GM12878 (cell line): ENCODE measurements at regions of chr18 and their contacts with region 1.

Region 1: DNA sequence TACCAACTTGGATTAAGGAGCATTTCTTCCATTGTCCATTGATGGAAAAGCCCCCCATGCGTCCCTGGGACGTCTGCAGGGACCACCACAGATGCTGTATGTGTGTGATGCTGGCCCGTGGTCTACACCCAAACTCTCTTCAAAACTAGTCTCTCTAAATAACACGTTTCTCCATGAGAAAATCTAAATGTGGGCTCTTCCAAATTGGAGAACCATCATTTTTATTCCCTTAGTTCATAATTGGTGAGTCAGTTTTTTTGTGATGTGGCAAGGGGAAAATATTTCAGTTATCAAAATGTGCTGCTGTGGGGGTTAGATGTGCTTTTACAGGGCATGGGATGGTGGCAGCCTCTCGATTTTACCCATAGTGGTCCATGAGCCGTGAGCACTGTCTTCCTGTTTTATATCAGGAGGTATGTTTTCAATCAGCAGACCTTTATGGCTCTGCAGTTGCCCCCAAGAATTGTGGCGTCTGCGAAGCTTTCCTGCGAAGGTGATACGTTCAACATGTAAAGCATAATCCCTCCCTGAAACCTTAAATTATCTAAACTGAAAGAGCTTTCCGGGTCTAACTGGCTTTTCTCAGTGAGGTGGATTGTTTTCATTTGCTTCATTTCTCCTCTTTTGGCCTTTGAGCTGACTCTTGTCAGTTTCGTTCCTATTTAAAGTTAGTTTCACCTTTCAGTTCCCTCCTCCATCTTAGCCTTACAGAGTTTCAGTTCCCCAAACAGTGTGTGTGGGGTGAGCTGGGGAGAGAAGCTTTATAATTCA is 78.4 kb downstream of the SETBP1 start:
- DNase-seq: peak; percentile 98
- ATAC-seq: peak; percentile 93
- H3K4me3 ChIP-seq: peak overlapping the region; percentile 28
- H3K27ac ChIP-seq: peak overlapping the region; percentile 98
- H3K4me1 ChIP-seq: peaks cover 35% of the 10 kb centered on the region
- H3K27me3 ChIP-seq: no peaks in the 10 kb centered on the region
- CTCF ChIP-seq: no peak
- EP300 ChIP-seq: peak; percentile 99 to 100
- POLR2A ChIP-seq: no peak
- RAD21 ChIP-seq: peak; percentile 22; the same call in 1 of the 2 replicates

Region 2: DNA sequence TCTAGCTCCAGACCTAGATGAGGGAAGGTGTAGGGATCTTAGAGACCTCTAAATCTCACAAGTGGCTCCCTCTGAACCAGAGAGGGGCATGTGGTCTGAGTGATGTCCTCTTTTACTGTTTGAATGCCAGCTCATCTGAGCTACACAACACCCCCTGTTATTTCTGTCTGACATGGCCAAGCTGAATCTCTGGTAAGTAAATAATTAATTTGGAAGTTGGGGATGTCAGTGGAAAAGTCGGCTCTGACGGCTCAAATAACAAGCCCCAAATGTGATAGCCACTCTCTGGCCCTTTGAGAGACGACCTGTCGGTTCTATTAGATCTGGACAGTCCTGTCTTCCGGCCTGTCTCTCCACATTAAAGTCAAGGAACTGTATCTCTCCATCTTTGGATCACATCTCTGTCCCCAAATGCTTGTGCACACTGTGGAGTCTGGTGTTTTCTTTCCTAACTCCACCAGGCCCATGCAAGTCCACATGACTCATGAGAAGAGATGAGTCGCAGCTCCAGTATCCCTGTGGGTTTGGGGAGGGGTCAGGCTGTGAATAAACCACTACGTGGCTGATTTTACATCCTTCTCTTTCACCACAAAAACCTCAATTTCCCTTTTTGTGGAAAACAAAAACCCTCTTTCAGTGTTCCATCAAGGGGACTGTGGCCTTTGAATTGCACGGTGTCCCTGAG is 25.8 kb before region 1 on chr18:
- CTCF ChIA-PET with region 1: interaction called, 4 read pairs
- POLR2A ChIA-PET with region 1: interaction called, 12 read pairs
- RAD21 ChIA-PET with region 1: interaction called, 22 read pairs
- SMC1A ChIA-PET with region 1: interaction called, 111 read pairs
- in situ Hi-C with region 1: no loop called
- intact Hi-C with region 1: no loop called
- DNase-seq: no peak
- ATAC-seq: peak; percentile 16; the same call in 1 of the 3 replicates
- H3K4me3 ChIP-seq: no peak overlapping the region
- H3K27ac ChIP-seq: no peak overlapping the region
- H3K4me1 ChIP-seq: peaks cover 41% of the 10 kb centered on the region
- H3K27me3 ChIP-seq: no peaks in the 10 kb centered on the region
- CTCF ChIP-seq: no peak
- EP300 ChIP-seq: no peak
- POLR2A ChIP-seq: no peak
- RAD21 ChIP-seq: no peak

Region 3: DNA sequence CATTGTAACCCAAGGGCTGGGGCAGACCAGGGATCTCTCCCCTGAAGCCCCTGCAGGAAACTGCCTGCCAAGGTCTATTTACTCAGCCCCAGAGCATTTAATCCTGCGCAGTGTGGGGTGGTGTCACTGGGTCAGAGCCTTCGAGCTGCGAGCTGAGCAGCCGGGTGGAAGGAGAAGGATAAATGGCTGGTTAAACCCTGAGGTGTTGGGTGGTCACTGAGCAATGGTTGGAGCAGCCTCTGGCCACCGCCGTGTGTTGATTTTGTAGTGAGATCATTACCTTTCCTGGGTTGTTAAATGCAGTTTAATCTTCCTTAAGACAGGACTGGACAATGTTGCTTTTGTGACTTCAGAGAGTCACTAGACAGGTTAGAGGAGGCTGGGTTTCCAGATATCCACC is 19.7 kb after region 1 on chr18:
- CTCF ChIA-PET with region 1: no interaction called
- POLR2A ChIA-PET with region 1: no interaction called
- RAD21 ChIA-PET with region 1: interaction called, 4 read pairs
- SMC1A ChIA-PET with region 1: interaction called, 12 read pairs
- in situ Hi-C with region 1: no loop called
- intact Hi-C with region 1: no loop called
- DNase-seq: no peak
- ATAC-seq: no peak
- H3K4me3 ChIP-seq: no peak overlapping the region
- H3K27ac ChIP-seq: no peak overlapping the region
- H3K4me1 ChIP-seq: no peaks in the 10 kb centered on the region
- H3K27me3 ChIP-seq: no peaks in the 10 kb centered on the region
- CTCF ChIP-seq: no peak
- EP300 ChIP-seq: no peak
- POLR2A ChIP-seq: no peak
- RAD21 ChIP-seq: no peak

Region 4: DNA sequence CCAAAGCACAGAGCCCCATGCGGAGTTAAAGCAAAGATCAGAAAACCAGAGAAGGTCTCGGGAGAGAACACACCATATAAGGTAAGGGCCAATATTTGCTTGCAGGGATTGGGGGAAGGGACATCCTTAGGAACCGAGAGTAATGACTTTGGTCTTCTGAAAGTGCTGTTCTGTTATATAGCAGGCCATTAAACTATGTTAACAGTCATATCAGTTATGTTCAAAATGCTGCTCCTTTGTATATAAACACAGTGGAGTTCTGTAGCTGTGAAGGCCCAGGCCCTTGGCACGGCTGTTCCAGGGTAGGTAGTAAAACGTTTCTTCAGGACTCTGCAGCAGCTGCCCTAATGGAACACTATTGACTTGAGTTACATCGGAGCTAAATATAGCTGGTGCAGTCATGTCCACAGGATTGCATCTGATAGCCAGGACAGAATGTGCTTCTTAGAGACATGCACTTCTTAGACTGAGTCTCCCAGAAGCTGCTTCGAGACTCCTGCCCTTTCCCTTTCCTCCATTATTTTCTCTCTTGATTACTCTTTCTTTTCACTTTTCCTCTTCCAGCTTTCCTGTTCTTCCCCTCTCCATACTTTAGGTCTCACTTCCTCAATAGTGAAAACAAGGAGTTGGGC is 44.1 kb after region 1 on chr18:
- CTCF ChIA-PET with region 1: interaction called, 5 read pairs
- POLR2A ChIA-PET with region 1: interaction called, 11 read pairs
- RAD21 ChIA-PET with region 1: interaction called, 45 read pairs
- SMC1A ChIA-PET with region 1: interaction called, 69 read pairs
- in situ Hi-C with region 1: no loop called
- intact Hi-C with region 1: loop called (anchors 1 kb)
- DNase-seq: no peak
- ATAC-seq: peak; percentile 52
- H3K4me3 ChIP-seq: 0 out of 2 replicates have a peak overlapping the region, but pooled peaks have one; percentile 12
- H3K27ac ChIP-seq: no peak overlapping the region
- H3K4me1 ChIP-seq: peaks cover 43% of the 10 kb centered on the region
- H3K27me3 ChIP-seq: no peaks in the 10 kb centered on the region
- CTCF ChIP-seq: no peak
- EP300 ChIP-seq: no peak
- POLR2A ChIP-seq: no peak
- RAD21 ChIP-seq: no peak

Region 5: DNA sequence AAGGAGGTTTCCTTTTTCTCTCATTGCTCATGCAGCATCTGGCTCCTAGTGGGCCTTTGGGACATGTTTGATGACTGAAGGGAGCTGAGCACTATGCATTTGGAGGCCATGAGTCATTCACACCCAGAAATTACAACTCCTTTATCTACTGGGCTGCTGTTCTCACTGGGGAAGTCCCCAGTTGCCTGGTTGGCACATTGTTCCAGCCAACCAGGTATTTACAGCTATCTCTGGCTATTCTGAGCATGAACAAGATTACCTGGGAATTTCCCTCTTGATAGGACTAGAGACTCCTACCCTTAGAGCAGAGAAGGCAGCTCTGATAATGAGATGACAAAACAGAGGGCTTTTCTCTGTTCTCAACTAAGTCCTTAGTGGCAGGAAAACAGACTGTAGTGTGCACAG is 128.2 kb after region 1 on chr18:
- CTCF ChIA-PET with region 1: interaction called, 6 read pairs
- POLR2A ChIA-PET with region 1: no interaction called
- RAD21 ChIA-PET with region 1: interaction called, 30 read pairs
- SMC1A ChIA-PET with region 1: interaction called, 13 read pairs
- in situ Hi-C with region 1: no loop called
- intact Hi-C with region 1: loop called (anchors 2 kb)
- DNase-seq: peak; percentile 69
- ATAC-seq: peak; percentile 95
- H3K4me3 ChIP-seq: no peak overlapping the region
- H3K27ac ChIP-seq: peak overlapping the region; percentile 36
- H3K4me1 ChIP-seq: peaks cover 14% of the 10 kb centered on the region
- H3K27me3 ChIP-seq: no peaks in the 10 kb centered on the region
- CTCF ChIP-seq: no peak
- EP300 ChIP-seq: 0 out of 4 replicates have a peak, but pooled peaks of 1 of the 2 experiments have one; percentile 44
- POLR2A ChIP-seq: no peak
- RAD21 ChIP-seq: no peak

Region 6: GRCh38 chr18:44996261-44996660 is 237.2 kb after region 1 on chr18:
- CTCF ChIA-PET with region 1: no interaction called
- POLR2A ChIA-PET with region 1: no interaction called
- RAD21 ChIA-PET with region 1: no interaction called
- SMC1A ChIA-PET with region 1: no interaction called
- in situ Hi-C with region 1: no loop called
- intact Hi-C with region 1: no loop called
- DNase-seq: no peak
- ATAC-seq: peak; percentile 84
- H3K4me3 ChIP-seq: no peak overlapping the region
- H3K27ac ChIP-seq: no peak overlapping the region
- H3K4me1 ChIP-seq: no peaks in the 10 kb centered on the region
- H3K27me3 ChIP-seq: no peaks in the 10 kb centered on the region
- CTCF ChIP-seq: no peak
- EP300 ChIP-seq: no peak
- POLR2A ChIP-seq: no peak
- RAD21 ChIP-seq: no peak

Region 7: GRCh38 chr18:45317948-45318640 is 559.0 kb after region 1 on chr18:
- CTCF ChIA-PET with region 1: no interaction called
- POLR2A ChIA-PET with region 1: no interaction called
- RAD21 ChIA-PET with region 1: no interaction called
- SMC1A ChIA-PET with region 1: no interaction called
- in situ Hi-C with region 1: no loop called
- intact Hi-C with region 1: no loop called
- DNase-seq: no peak
- ATAC-seq: no peak
- H3K4me3 ChIP-seq: no peak overlapping the region
- H3K27ac ChIP-seq: no peak overlapping the region
- H3K4me1 ChIP-seq: no peaks in the 10 kb centered on the region
- H3K27me3 ChIP-seq: no peaks in the 10 kb centered on the region; a peak in 1 of 4 replicates
- CTCF ChIP-seq: no peak
- EP300 ChIP-seq: no peak
- POLR2A ChIP-seq: no peak
- RAD21 ChIP-seq: no peak